ENCODE measurements at regions of chr7 and their contacts with region 1.

Region 1: DNA sequence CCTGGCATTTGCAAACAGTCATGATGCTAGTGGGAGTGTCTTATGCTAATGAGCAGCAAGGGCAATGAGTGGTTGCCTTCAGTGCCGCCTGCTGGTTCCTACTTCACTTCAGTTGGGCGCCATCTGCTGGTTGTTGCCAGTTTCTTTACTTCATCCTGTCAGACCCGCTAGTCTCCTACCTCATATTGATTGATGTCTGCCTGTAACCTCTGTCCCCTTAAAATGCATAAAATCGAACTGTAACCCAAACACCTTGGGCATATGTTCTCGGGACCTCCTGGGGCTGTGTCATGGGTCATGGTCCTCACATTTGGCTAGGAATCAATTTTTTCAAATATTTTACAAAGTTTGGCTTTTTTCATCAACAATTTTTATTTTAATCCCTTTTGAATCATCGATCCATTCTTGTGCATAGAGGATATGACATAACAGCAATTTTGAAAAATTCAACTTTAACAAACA is 62.8 kb upstream of the C7orf33 start:
- DNase-seq: peak; percentile 65 to 88
- H3K4me3 ChIP-seq: no peak overlapping the region
- H3K27ac ChIP-seq: no peak overlapping the region
- H3K4me1 ChIP-seq: peaks cover 0 to 3% (median under 1%) of the 10 kb centered on the region in 4 experiments; a peak in 1 of 7 replicates
- H3K27me3 ChIP-seq: no peaks in the 10 kb centered on the region
- CTCF ChIP-seq: peak; percentile 74 to 99 (median 91)
- EP300 ChIP-seq: no peak
- POLR2A ChIP-seq: no peak
- RAD21 ChIP-seq: peak; percentile 76 to 79

Region 2: GRCh38 chr7:148458263-148458662 is 69.5 kb before region 1 on chr7:
- CTCF ChIA-PET with region 1: no interaction called
- POLR2A ChIA-PET with region 1: no interaction called
- DNase-seq: no peak
- H3K4me3 ChIP-seq: no peak overlapping the region
- H3K27ac ChIP-seq: no peak overlapping the region
- H3K4me1 ChIP-seq: no peaks in the 10 kb centered on the region
- H3K27me3 ChIP-seq: no peaks in the 10 kb centered on the region
- CTCF ChIP-seq: no peak
- EP300 ChIP-seq: no peak
- POLR2A ChIP-seq: no peak
- RAD21 ChIP-seq: no peak; a peak in 2 of 4 replicates

Region 3: DNA sequence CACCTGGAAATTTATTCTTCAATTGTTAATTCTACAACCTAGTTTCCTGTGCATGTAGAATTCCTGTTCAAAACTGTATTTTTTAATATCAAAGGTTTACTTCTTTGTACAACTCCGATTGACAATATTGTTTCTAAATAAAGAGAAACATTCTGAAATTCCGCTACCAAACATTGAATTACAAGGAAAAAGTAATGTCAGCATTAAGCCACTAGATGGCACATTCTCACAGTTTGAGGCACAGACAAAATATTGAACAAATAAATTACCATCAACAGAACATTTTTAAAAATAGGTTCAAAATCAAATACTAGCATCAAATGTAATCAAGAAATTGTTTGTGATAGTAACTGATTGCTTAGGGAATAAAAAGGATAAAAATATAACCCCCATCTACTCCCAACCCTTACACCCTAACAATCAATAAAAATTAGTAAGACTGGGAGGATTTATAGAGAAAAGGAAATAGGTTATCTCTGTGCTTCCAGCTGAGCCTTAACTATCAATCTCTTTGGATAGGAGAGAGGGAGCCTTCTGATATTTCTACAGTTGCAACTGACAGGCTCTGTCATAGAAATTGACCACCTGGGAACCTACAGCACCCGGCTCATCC is 23.8 kb before region 1 on chr7:
- CTCF ChIA-PET with region 1: interaction called, 16 read pairs
- POLR2A ChIA-PET with region 1: no interaction called
- DNase-seq: no peak
- H3K4me3 ChIP-seq: no peak overlapping the region
- H3K27ac ChIP-seq: no peak overlapping the region
- H3K4me1 ChIP-seq: peaks cover 9 to 21% (median 14%) of the 10 kb centered on the region in 4 experiments
- H3K27me3 ChIP-seq: no peaks in the 10 kb centered on the region
- CTCF ChIP-seq: peak in 2 of 3 experiments; percentile 45 to 58; a peak in 2 of 4 replicates
- EP300 ChIP-seq: no peak
- POLR2A ChIP-seq: no peak
- RAD21 ChIP-seq: peak; percentile 62 to 76